ENCODE measurements at regions of chr3 and their contacts with region 1.

Region 1: DNA sequence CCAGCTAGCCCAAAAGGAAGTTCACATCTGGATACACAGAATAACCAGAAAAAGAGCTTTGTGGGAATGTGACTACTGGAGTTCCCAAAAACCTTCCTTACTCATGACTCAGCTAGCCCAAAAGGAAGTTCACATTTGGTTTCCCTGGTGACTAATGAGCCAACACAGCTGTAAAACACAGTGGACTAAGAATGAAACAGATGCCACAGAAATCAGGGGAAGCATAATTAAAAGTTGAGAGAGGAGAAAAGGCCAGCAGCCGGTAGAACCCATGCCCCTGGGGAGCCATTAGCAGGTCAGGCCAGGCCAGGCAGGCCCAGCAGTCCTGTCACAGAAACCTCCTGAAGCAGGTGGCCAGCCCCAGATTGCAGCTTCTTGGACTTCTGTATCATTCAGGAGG is 130.3 kb downstream of the GHSR start:
- DNase-seq: peak in 1 of 2 donors; percentile 82
- H3K4me3 ChIP-seq: no peak overlapping the region
- H3K27ac ChIP-seq: peak overlapping the region; percentile 80 to 84
- H3K4me1 ChIP-seq: peaks cover 4 to 72% of the 10 kb centered on the region in 2 donors
- H3K27me3 ChIP-seq: no peaks in the 10 kb centered on the region
- CTCF ChIP-seq: no peak

Region 2: GRCh38 chr3:171874251-171874679 is 443.7 kb before region 1 on chr3:
- intact Hi-C with region 1: loop called (anchors 10 kb)
- DNase-seq: peak in 1 of 2 donors; percentile 67
- H3K4me3 ChIP-seq: no peak overlapping the region
- H3K27ac ChIP-seq: peak overlapping the region; percentile 56 to 70
- H3K4me1 ChIP-seq: peaks cover 10 to 22% of the 10 kb centered on the region in 2 donors
- H3K27me3 ChIP-seq: no peaks in the 10 kb centered on the region
- CTCF ChIP-seq: no peak

Region 3: DNA sequence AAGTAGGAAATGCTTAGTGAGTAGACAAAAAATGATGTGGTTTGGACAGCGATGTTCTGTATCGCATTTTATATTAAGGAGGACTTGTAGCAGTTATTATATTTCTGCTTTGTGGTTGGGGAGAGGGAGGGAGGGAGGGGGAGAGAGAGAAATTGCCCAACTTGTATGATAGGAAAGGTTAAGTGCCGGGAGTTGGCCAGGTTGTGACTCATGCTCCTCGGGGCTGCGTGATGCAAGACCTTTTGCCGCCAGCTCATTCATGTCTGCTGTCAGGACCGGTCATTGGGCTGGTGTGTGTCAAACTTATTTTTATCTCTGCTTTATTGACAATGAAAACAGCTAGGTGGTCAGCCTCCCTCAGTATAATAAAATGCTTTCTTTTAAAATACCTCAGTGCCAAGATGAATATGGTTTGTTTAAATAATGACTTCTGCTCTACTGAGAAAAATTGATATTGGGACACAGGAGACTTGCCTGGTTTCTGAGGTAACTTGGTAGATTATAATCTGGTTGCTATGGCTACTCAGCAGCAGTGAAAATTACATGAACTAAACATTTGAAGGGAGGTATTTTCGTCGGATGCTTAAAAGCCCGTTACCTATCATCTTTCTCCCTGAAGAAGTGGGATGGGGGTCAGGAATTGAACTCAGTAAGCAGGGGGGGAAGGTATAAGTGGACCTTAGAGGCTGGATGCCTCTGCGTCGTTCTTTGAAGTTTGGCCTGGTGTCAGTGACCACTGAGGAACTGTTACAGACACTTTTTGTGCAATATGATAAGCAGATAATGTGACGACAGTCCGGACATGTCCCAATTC is 187.9 kb before region 1 on chr3:
- intact Hi-C with region 1: loop called (anchors 5 kb)
- DNase-seq: peak; percentile 91 to 98
- H3K4me3 ChIP-seq: no peak overlapping the region
- H3K27ac ChIP-seq: peak overlapping the region; percentile 79 to 83
- H3K4me1 ChIP-seq: peaks cover 0 to 41% of the 10 kb centered on the region in 2 donors
- H3K27me3 ChIP-seq: no peaks in the 10 kb centered on the region
- CTCF ChIP-seq: no peak

Region 4: GRCh38 chr3:172153335-172153861 is 164.6 kb before region 1 on chr3:
- intact Hi-C with region 1: loop called (anchors 5 kb)
- DNase-seq: peak; percentile 95 to 98
- H3K4me3 ChIP-seq: peak overlapping the region; percentile 15 to 41
- H3K27ac ChIP-seq: peak overlapping the region; percentile 92 to 97
- H3K4me1 ChIP-seq: peaks cover 38 to 47% of the 10 kb centered on the region in 2 donors
- H3K27me3 ChIP-seq: no peaks in the 10 kb centered on the region
- CTCF ChIP-seq: no peak

Region 5: GRCh38 chr3:172201136-172201869 is 116.7 kb before region 1 on chr3:
- intact Hi-C with region 1: loop called (anchors 5 kb)
- DNase-seq: peak; percentile 12 to 72
- H3K4me3 ChIP-seq: no peak overlapping the region
- H3K27ac ChIP-seq: peak overlapping the region; percentile 75 to 88
- H3K4me1 ChIP-seq: peaks cover 11 to 46% of the 10 kb centered on the region in 2 donors
- H3K27me3 ChIP-seq: no peaks in the 10 kb centered on the region
- CTCF ChIP-seq: no peak

Region 6: DNA sequence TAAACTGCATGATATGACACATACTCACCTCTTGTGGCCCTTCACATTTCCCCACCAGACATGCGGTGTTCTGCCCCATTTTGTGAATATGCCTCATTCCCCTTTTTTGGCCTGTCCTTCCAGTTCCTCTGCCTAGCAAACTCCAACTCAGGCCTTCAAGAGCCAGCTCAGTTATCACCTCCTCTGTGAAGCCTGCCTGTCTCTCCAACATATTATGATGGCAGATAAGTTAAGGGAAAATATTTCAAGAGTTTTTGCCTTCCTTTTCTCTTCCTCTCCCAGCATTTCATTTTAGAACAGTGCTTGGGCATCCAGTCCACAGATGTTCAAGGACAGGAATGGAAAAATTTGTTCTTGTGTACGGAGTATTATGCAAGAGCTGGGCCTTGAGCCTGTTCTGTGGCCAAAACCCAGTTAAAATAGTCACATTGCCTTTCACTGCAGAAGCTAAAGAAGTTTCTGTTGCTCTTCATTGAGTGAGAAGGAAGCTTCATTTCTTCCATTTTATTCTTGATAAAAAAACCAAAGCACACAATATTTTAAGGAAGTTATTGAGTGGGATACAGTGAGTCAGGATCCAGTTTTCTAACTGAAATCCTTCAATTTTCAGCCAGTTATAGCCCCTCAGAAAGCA is 61.8 kb before region 1 on chr3:
- intact Hi-C with region 1: loop called (anchors 5 kb)
- DNase-seq: peak in 1 of 2 donors; percentile 83
- H3K4me3 ChIP-seq: no peak overlapping the region
- H3K27ac ChIP-seq: peak overlapping the region; percentile 89 to 91
- H3K4me1 ChIP-seq: peaks cover 25 to 54% of the 10 kb centered on the region in 2 donors
- H3K27me3 ChIP-seq: no peaks in the 10 kb centered on the region
- CTCF ChIP-seq: no peak